Calu3 (cell line): ENCODE measurements at regions of chr19 and their contacts with region 1.

Region 1: GRCh38 chr19:41563854-41564514 is 12.0 kb upstream of the CEACAM21 start:
- DNase-seq: peak; percentile 57
- H3K4me3 Mint-ChIP-seq: no peak overlapping the region
- H3K27ac Mint-ChIP-seq: no peak overlapping the region
- H3K4me1 Mint-ChIP-seq: no peaks in the 10 kb centered on the region
- H3K27me3 Mint-ChIP-seq: peaks cover 86% of the 10 kb centered on the region
- CTCF ChIP-seq: no peak

Region 2: DNA sequence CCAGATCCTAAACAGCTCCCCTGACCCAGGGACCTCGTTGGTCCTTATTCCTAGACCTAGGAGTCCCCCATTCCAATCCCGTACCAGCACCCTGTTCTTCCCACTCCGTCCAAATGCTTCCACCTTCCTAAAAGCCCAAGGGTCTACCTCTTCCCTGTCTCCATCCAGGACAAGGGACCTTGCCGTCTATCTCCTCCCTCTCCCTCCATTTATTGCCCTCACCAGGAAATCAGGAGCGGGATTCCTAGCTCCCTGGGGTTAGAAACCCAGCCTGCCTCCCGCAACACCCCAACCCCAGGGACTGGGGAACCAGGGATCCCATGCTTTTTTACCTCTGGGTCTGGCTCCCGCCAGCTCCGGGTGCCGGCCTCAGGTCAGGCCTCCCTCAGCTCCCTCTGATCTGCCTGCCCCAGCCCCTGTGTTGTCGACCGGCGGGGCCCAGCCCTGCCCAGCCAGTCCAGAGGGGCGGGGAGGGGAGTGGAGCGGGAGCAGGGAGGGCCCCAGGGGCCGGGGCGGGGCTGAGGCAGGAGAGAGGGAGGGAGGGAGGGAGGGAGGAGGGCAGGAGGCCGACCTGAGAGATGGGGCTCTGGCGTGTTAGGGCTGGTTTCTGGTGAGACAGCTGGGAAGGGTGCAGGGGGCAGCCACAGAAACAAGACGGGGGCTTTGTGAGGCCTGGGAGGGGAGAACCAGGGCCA is 136.9 kb before region 1 on chr19 and contains the start of gene B3GNT8:
- CTCF ChIA-PET with region 1: no interaction called
- intact Hi-C with region 1: no loop called
- DNase-seq: peak; percentile 24
- H3K4me3 Mint-ChIP-seq: no peak within 1 kb of the TSS
- H3K27ac Mint-ChIP-seq: peak within 1 kb of the TSS; percentile 16
- H3K4me1 Mint-ChIP-seq: peaks cover 11% of the 10 kb centered on the region
- H3K27me3 Mint-ChIP-seq: no peaks in the 10 kb centered on the region
- CTCF ChIP-seq: no peak
- total RNA-seq, gene B3GNT8: 0.19 TPM in 1 of 2 replicates, not detected in the other

Region 3: GRCh38 chr19:41449079-41449864 is 114.7 kb before region 1 on chr19:
- CTCF ChIA-PET with region 1: interaction called, 31 read pairs
- intact Hi-C with region 1: loop called (anchors 1 kb)
- DNase-seq: peak; percentile 87
- H3K4me3 Mint-ChIP-seq: peak overlapping the region; percentile 51
- H3K27ac Mint-ChIP-seq: peak overlapping the region; percentile 11
- H3K4me1 Mint-ChIP-seq: peaks cover 11% of the 10 kb centered on the region
- H3K27me3 Mint-ChIP-seq: peaks cover 32% of the 10 kb centered on the region
- CTCF ChIP-seq: peak; percentile 97

Region 4: DNA sequence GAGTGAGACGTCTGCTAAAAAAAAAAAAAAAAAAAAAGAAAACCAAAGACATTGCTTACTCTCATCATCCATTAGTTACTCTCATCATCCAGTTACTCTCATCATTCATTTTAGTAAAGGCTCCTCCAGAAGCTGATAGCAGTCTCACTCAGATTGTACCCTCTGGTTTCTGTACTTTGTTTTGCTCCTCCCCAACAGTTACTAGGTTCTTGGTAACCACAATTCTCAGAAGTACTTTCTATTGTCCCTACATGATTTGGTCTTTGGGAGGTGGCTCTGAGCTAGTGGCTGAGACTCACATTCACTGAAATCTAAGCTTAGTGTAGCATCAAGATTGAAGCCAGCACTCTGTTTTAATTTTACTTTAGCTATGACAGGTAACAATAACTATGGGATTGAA is 106.7 kb before region 1 on chr19:
- CTCF ChIA-PET with region 1: interaction called, 11 read pairs
- intact Hi-C with region 1: no loop called
- DNase-seq: no peak
- H3K4me3 Mint-ChIP-seq: no peak overlapping the region
- H3K27ac Mint-ChIP-seq: no peak overlapping the region
- H3K4me1 Mint-ChIP-seq: peaks cover 29% of the 10 kb centered on the region
- H3K27me3 Mint-ChIP-seq: peaks cover 31% of the 10 kb centered on the region
- CTCF ChIP-seq: no peak

Region 5: GRCh38 chr19:41641879-41642485 is 78.0 kb after region 1 on chr19:
- CTCF ChIA-PET with region 1: no interaction called
- intact Hi-C with region 1: no loop called
- DNase-seq: peak; percentile 88
- H3K4me3 Mint-ChIP-seq: no peak overlapping the region
- H3K27ac Mint-ChIP-seq: no peak overlapping the region
- H3K4me1 Mint-ChIP-seq: no peaks in the 10 kb centered on the region
- H3K27me3 Mint-ChIP-seq: peaks cover 61% of the 10 kb centered on the region
- CTCF ChIP-seq: peak; percentile 95